CD8-positive, alpha-beta memory T cell (primary cell): ENCODE measurements at regions of chr16 and their contacts with region 1.

Region 1: DNA sequence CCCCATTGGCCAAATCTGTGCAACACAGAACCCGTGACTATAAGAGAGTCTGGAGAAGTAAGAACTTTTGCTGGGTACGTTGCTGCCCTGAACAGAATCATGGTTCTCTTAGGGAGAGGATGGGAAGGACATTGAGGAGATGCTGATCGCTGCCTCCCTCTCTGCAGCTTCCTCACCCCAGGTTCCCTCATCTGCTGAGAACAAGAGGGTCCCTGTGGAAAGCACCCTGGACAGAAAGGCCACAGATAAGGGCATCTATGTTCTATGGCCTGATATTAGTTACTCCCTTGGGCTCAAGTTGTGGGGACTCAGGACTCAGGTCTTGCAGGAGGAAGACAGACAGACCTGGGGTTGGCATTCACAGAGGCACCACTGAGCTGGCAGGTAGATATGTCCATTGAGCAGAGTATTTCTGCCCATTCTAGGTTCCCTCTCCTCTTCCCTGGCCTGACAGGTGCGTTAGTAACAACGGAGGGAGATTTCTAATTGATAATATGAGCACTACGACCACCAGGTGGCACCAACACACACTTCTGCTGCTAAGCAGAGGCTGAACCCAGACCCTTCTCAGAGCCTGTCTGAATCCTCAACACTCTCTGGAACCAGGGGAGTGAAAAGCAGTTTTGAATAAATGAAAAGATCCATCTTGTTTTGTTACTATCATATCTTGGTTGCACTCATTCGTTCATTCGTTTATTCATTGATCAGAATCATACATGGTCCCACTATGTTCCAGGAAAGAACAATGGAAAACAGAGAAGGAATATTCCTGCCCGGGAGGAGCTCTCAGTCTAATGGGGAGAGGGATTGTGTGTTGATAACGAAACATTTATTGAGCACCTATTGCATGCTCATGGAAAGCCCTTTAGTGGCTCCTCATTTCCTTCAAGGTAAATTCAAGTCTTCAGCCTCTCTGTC is 56.4 kb downstream of the SLC6A2 start:
- DNase-seq: peak; percentile 10 to 65 (median 34)
- H3K4me3 ChIP-seq: no peak overlapping the region
- H3K4me3 Mint-ChIP-seq: no peak overlapping the region
- H3K27ac ChIP-seq: no peak overlapping the region
- H3K27ac Mint-ChIP-seq: peak overlapping the region in 1 of 8 donors; percentile 94
- H3K4me1 ChIP-seq: no peaks in the 10 kb centered on the region
- H3K4me1 Mint-ChIP-seq: no peaks in the 10 kb centered on the region
- H3K27me3 ChIP-seq: no peaks in the 10 kb centered on the region
- H3K27me3 Mint-ChIP-seq: peaks cover 8 to 62% of the 10 kb centered on the region in 2 donors

Region 2: DNA sequence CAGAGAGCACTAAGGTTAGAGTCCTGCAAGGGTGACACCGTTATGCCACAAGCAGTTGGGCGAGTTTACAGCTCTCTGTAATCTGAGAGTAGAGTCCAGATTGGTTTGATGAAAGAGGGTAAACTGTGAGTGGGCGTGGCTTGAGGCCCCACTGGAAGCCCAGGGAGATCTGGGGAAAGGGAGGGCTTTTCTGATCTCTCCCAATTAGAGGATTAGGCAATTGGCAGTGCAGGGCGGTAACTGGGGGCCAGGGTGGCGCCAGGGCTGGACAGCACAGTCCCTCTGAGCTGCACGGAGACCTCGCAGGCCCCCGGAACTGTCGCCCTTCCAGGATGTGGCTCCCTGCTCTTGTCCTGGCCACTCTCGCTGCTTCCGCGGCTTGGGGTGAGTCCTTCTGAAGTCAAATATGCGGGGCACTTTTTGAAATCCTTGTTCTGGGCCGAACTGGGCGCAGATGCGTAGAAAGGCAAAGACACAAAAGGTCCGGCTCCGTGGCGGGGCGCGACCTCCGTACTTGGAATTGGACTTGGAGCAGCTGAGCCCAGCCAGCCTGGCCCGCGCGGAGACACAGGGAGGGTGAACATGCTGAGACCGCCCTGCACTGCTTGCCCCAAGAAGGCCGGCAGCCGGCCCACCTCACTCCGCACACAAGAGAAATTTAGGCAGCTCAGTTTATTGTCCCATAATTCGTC is 48.2 kb after region 1 on chr16:
- CTCF ChIA-PET with region 1: no interaction called
- POLR2A ChIA-PET with region 1: no interaction called
- DNase-seq: no peak
- H3K4me3 ChIP-seq: no peak overlapping the region
- H3K4me3 Mint-ChIP-seq: no peak overlapping the region
- H3K27ac ChIP-seq: no peak overlapping the region
- H3K27ac Mint-ChIP-seq: no peak overlapping the region
- H3K4me1 ChIP-seq: no peaks in the 10 kb centered on the region
- H3K4me1 Mint-ChIP-seq: no peaks in the 10 kb centered on the region
- H3K27me3 ChIP-seq: no peaks in the 10 kb centered on the region
- H3K27me3 Mint-ChIP-seq: peaks cover 18 to 21% of the 10 kb centered on the region in 2 donors

Region 3: GRCh38 chr16:55842369-55843104 is 130.3 kb after region 1 on chr16:
- CTCF ChIA-PET with region 1: interaction called, 13 read pairs
- POLR2A ChIA-PET with region 1: no interaction called
- DNase-seq: peak in 2 of 5 donors; percentile 12 to 15
- H3K4me3 ChIP-seq: no peak overlapping the region
- H3K4me3 Mint-ChIP-seq: no peak overlapping the region
- H3K27ac ChIP-seq: no peak overlapping the region
- H3K27ac Mint-ChIP-seq: no peak overlapping the region
- H3K4me1 ChIP-seq: no peaks in the 10 kb centered on the region
- H3K4me1 Mint-ChIP-seq: peaks cover 4 to 9% (median 5%) of the 10 kb centered on the region in 3 donors
- H3K27me3 ChIP-seq: no peaks in the 10 kb centered on the region
- H3K27me3 Mint-ChIP-seq: peaks cover 11 to 32% of the 10 kb centered on the region in 2 donors